ENCODE measurements at regions of chr16 and their contacts with region 1.

Region 1: DNA sequence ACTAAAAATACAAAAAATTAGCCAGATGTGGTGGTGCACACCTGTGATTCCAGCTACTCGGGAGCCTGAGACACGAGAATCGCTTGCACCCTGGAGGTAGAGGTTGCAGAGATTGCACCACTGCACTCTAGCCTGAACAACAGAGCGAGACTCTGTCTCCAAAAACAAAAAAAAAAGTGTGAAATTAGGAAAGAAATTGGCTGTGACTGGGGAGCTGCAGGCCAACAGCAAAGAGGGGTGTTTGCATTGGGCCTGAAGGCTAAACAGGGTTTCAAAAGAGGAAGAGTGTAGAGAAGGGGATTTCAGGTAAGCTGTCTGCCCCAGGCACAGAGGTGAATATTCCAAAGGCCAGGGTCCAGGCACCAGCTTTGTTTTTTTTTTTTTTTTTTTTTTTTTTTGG is 9.4 kb downstream of the BMERB1 start:
- DNase-seq: no peak
- ATAC-seq: no peak
- H3K4me3 Mint-ChIP-seq: no peak overlapping the region
- H3K27ac Mint-ChIP-seq: no peak overlapping the region
- H3K4me1 Mint-ChIP-seq: no peaks in the 10 kb centered on the region
- H3K27me3 Mint-ChIP-seq: no peaks in the 10 kb centered on the region
- CTCF ChIP-seq: no peak

Region 2: GRCh38 chr16:15404792-15405191 is 39.0 kb before region 1 on chr16:
- CTCF ChIA-PET with region 1: no interaction called
- POLR2A ChIA-PET with region 1: no interaction called
- intact Hi-C with region 1: no loop called
- DNase-seq: no peak
- ATAC-seq: no peak
- H3K4me3 Mint-ChIP-seq: no peak overlapping the region
- H3K27ac Mint-ChIP-seq: no peak overlapping the region
- H3K4me1 Mint-ChIP-seq: peaks cover 16% of the 10 kb centered on the region
- H3K27me3 Mint-ChIP-seq: no peaks in the 10 kb centered on the region
- CTCF ChIP-seq: no peak

Region 3: DNA sequence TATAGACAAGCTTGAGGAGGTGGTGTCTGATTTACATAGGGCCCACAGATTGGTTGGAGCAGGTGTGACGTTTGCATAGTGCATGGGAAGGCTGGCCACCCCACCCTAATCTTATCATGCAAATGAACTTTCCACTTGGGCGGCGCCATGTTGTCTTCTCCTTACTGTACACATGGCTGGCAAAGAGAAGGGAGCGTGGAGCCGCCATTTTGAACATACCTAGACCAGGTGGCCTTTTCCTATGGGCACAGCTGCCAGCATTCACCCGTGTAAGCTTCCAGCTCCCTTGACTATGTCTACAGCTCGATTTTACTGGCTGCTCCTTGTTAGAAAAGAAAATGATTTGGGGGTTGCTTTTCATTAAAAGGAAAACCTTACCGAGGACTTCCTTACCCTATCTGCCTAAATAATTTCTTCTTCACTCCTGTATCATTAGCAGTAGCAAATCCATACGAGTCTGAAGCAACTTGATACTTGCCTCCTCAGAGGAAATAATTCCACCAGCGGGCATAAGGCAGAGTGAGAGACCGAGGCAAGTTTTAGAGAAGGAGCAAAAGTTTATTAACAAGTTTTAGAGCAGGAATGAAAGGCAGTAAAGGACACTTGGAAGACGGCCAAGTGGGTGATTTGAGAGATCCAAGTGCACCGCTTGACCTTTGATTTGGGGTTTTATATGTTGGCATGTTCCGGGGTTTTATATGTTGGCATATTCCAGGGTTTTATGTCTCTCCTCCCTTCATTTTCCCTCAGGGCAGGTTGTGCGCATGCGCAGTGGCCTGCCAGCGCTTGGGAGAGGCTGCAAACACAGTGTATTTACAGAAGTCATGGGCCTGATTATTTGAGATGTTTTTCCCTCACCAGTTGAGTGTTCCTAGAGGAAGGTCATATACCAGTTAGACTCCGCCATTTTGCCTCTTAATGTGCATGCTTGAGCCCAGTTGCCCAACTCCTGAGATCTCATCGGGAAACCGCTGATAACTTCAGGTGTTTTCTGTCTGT is 133.5 kb after region 1 on chr16:
- CTCF ChIA-PET with region 1: no interaction called
- POLR2A ChIA-PET with region 1: interaction called, 17 read pairs
- intact Hi-C with region 1: no loop called
- DNase-seq: no peak
- ATAC-seq: no peak
- H3K4me3 Mint-ChIP-seq: no peak overlapping the region
- H3K27ac Mint-ChIP-seq: no peak overlapping the region
- H3K4me1 Mint-ChIP-seq: peaks cover 10% of the 10 kb centered on the region
- H3K27me3 Mint-ChIP-seq: no peaks in the 10 kb centered on the region
- CTCF ChIP-seq: no peak

Measured in activated B cell treated with CpG ODN at 0.5 μM for 24 hours (primary cell).